Mammary epithelial cell (primary cell): ENCODE measurements at regions of chr6 and their contacts with region 1.

Region 1: GRCh38 chr6:143575440-143575839 is 63.9 kb upstream of the FUCA2 start:
- DNase-seq: peak; percentile 61
- H3K4me3 ChIP-seq: no peak overlapping the region
- H3K27ac ChIP-seq: no peak overlapping the region
- H3K4me1 ChIP-seq: peaks cover 6% of the 10 kb centered on the region
- H3K27me3 ChIP-seq: no peaks in the 10 kb centered on the region
- CTCF ChIP-seq: peak; percentile 78 to 80

Region 2: DNA sequence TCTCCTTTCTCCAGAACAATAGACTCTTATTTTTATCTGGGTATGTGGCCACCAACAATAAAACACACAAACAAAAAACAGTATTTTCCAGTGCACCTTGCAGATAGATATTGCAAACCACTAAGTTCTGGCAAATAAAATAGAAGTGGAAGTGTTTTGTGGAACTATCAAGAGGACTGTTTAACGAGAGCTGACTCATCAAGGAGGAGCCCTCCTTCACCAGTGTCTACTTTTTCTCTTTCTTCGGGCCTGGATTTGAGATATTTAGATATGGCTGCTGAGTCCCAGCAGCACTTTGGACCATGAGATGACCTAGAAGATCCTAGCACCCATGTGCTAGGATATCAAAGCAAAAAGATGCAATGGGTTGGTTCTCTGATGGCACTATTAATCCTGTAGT is 360.1 kb before region 1 on chr6:
- CTCF ChIA-PET with region 1: no interaction called
- dilution Hi-C with region 1: no loop called
- in situ Hi-C with region 1: no loop called
- intact Hi-C with region 1: no loop called
- DNase-seq: no peak
- H3K4me3 ChIP-seq: no peak overlapping the region
- H3K27ac ChIP-seq: no peak overlapping the region
- H3K4me1 ChIP-seq: no peaks in the 10 kb centered on the region
- H3K27me3 ChIP-seq: no peaks in the 10 kb centered on the region
- CTCF ChIP-seq: no peak

Region 3: GRCh38 chr6:143490775-143491174 is 84.7 kb before region 1 on chr6:
- CTCF ChIA-PET with region 1: no interaction called
- dilution Hi-C with region 1: no loop called
- in situ Hi-C with region 1: no loop called
- intact Hi-C with region 1: no loop called
- DNase-seq: no peak
- H3K4me3 ChIP-seq: no peak overlapping the region
- H3K27ac ChIP-seq: no peak overlapping the region
- H3K4me1 ChIP-seq: no peaks in the 10 kb centered on the region
- H3K27me3 ChIP-seq: no peaks in the 10 kb centered on the region
- CTCF ChIP-seq: no peak

Region 4: GRCh38 chr6:143677891-143678791 is 102.7 kb after region 1 on chr6 and contains the start of gene PHACTR2:
- CTCF ChIA-PET with region 1: no interaction called
- dilution Hi-C with region 1: no loop called
- in situ Hi-C with region 1: no loop called
- intact Hi-C with region 1: loop called (anchors 5 kb)
- DNase-seq: peak; percentile 58
- H3K4me3 ChIP-seq: peak within 1 kb of the TSS; percentile 62 to 82 (median 78)
- H3K27ac ChIP-seq: peak within 1 kb of the TSS; percentile 72
- H3K4me1 ChIP-seq: peaks cover 34% of the 10 kb centered on the region
- H3K27me3 ChIP-seq: no peaks in the 10 kb centered on the region
- CTCF ChIP-seq: no peak
- total RNA-seq, gene PHACTR2: 24.3 to 32.1 TPM

Region 5: GRCh38 chr6:143859888-143860660 is 284.6 kb after region 1 on chr6:
- CTCF ChIA-PET with region 1: no interaction called
- dilution Hi-C with region 1: no loop called
- in situ Hi-C with region 1: no loop called
- intact Hi-C with region 1: loop called (anchors 5 kb)
- DNase-seq: no peak
- H3K4me3 ChIP-seq: no peak overlapping the region
- H3K27ac ChIP-seq: no peak overlapping the region
- H3K4me1 ChIP-seq: no peaks in the 10 kb centered on the region
- H3K27me3 ChIP-seq: no peaks in the 10 kb centered on the region
- CTCF ChIP-seq: no peak

Region 6: DNA sequence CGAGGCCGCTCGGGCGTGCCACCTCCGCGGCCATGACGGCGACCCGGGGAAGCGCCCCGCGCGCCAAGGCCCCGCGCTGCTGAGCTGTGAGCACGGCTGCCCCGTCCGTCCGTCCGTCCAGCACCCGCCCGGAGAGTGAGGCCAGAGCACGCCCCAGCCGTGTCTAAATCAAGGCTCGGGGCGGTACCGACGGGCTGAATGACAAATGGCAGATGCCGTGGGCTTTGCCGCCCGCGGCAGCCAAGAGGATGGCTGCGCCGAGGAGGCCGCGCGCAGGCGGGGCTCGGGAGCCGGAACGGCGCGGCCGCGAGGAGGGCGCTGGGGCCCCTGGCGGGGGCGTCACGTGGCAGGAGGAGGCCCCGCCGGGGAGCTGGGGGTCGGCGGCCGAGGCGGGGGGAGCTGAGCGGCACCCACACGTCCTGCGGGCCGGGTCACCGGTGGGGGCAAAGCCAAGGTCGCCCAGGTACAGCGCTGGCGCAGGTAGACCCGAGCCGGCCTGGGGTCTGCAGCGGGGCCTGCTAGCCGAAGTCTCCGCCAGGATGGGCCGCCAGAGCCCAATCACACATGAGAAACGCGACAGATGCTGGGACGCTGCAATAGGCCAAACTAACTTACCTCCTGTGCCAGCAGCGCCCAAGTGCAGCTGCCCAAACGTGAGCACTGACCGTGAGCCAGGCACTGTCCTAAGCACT is 432.8 kb after region 1 on chr6 and contains the start of gene PLAGL1:
- CTCF ChIA-PET with region 1: no interaction called
- dilution Hi-C with region 1: no loop called
- in situ Hi-C with region 1: loop called in 1 of 2 experiments (anchors 5 kb)
- intact Hi-C with region 1: loop called (anchors 1 kb)
- DNase-seq: peak; percentile 57
- H3K4me3 ChIP-seq: peak within 1 kb of the TSS; percentile 55 to 66 (median 62)
- H3K27ac ChIP-seq: peak within 1 kb of the TSS; percentile 77
- H3K4me1 ChIP-seq: peaks cover 4% of the 10 kb centered on the region
- H3K27me3 ChIP-seq: no peaks in the 10 kb centered on the region
- CTCF ChIP-seq: no peak
- total RNA-seq, gene PLAGL1: 10.8 to 30.7 TPM

Region 7: GRCh38 chr6:144095331-144096002 is 520.0 kb after region 1 on chr6 and contains the start of gene SF3B5:
- CTCF ChIA-PET with region 1: no interaction called
- dilution Hi-C with region 1: no loop called
- in situ Hi-C with region 1: no loop called
- intact Hi-C with region 1: loop called (anchors 5 kb)
- DNase-seq: peak; percentile 100
- H3K4me3 ChIP-seq: peak within 1 kb of the TSS; percentile 58 to 91 (median 61)
- H3K27ac ChIP-seq: peak within 1 kb of the TSS; percentile 77
- H3K4me1 ChIP-seq: peaks cover 6% of the 10 kb centered on the region
- H3K27me3 ChIP-seq: no peaks in the 10 kb centered on the region
- CTCF ChIP-seq: no peak
- total RNA-seq, gene SF3B5: 81.9 to 132 TPM

Region 8: DNA sequence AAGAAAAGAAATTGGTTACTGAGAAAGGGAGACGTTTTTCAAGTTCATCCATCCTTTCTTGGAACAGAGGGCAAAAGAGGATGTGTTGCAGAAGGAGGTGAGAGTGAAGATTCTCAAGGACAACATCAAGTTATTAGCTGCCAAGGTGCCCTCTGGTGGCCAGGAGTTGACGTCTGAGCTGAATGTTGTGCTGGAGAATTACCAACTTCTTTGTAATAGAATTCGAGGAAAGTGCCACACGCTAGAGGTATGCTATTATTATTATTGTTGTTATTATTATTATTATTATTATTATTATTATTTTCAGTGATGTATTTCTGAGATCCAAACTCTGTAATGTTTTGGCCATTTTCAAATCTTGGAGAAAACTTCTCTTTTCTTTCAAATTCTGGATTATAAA is 906.7 kb after region 1 on chr6:
- CTCF ChIA-PET with region 1: no interaction called
- dilution Hi-C with region 1: no loop called
- in situ Hi-C with region 1: no loop called
- intact Hi-C with region 1: loop called (anchors 10 kb)
- DNase-seq: peak; percentile 60
- H3K4me3 ChIP-seq: no peak overlapping the region
- H3K27ac ChIP-seq: no peak overlapping the region
- H3K4me1 ChIP-seq: no peaks in the 10 kb centered on the region
- H3K27me3 ChIP-seq: no peaks in the 10 kb centered on the region
- CTCF ChIP-seq: peak; percentile 77 to 78